ENCODE measurements at regions of chr5 and their contacts with region 1.

Region 1: GRCh38 chr5:38809388-38810359 is 36.1 kb upstream of the OSMR start:
- DNase-seq: peak in 1 of 2 experiments; percentile 88
- H3K4me3 ChIP-seq: no peak overlapping the region
- H3K27ac ChIP-seq: no peak overlapping the region
- H3K4me1 ChIP-seq: no peaks in the 10 kb centered on the region; the same call in 1 of the 2 replicates
- H3K27me3 ChIP-seq: no peaks in the 10 kb centered on the region
- CTCF ChIP-seq: peak; percentile 95

Region 2: GRCh38 chr5:38265546-38266179 is 544.0 kb before region 1 on chr5:
- CTCF ChIA-PET with region 1: interaction called, 5 read pairs
- POLR2A ChIA-PET with region 1: no interaction called
- intact Hi-C with region 1: loop called (anchors 1 kb)
- DNase-seq: peak in 1 of 2 experiments; percentile 70
- H3K4me3 ChIP-seq: no peak overlapping the region
- H3K27ac ChIP-seq: no peak overlapping the region
- H3K4me1 ChIP-seq: no peaks in the 10 kb centered on the region
- H3K27me3 ChIP-seq: peaks cover 56% of the 10 kb centered on the region
- CTCF ChIP-seq: peak; percentile 90

Region 3: GRCh38 chr5:38420691-38421390 is 388.8 kb before region 1 on chr5:
- CTCF ChIA-PET with region 1: interaction called, 87 read pairs
- POLR2A ChIA-PET with region 1: no interaction called
- intact Hi-C with region 1: loop called (anchors 1 kb)
- DNase-seq: peak; percentile 40 to 74
- H3K4me3 ChIP-seq: no peak overlapping the region
- H3K27ac ChIP-seq: no peak overlapping the region
- H3K4me1 ChIP-seq: no peaks in the 10 kb centered on the region
- H3K27me3 ChIP-seq: peaks cover 10% of the 10 kb centered on the region; the same call in 1 of the 2 replicates
- CTCF ChIP-seq: peak; percentile 81

Region 4: DNA sequence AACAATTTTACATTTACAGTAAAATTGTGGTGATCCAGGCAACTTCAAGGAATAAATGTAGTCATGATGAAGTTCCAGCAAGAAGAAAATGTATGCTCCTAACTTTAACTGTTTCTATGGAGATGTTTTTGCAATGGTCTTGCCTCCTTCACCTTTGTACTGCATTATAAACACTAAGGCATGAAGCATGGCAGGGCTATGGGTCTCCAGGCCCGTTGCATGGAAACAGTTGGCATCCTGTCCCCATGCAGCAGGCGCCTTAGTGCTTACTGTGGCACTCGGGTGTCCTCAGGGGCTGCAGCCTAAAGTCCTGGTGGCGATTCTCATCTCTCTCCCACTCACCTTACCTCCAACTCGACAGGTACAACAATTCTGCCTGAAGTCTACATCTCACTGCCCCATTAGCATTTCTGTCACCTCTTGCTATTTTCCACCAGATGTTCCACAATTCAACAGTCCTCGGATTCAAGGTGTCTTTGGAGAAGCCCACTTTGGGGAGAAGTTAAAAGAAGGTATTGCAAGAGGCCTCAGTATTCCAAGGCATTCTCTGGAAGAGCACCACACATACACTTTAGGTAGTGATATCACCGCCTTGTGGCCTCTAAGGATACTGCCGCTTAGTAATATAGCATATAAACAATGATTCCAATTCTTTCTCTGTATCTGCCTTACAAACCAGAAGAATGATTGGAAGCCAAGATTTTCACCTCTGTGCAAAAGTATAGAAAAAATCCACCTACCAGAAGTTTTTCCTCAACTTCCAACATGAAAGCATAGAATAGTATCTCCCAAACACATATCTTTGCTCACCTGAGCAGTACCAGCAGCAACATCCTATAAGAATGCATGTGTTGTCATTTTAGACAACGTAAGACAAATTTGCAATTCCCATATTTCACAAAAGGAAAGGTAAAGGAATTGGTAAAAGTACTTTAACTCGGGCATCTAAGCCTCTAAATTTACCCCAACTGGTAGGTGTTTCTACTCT is 258.4 kb before region 1 on chr5:
- CTCF ChIA-PET with region 1: interaction called, 7 read pairs
- POLR2A ChIA-PET with region 1: no interaction called
- intact Hi-C with region 1: loop called (anchors 2 kb)
- DNase-seq: peak in 1 of 2 experiments; percentile 25
- H3K4me3 ChIP-seq: no peak overlapping the region
- H3K27ac ChIP-seq: no peak overlapping the region
- H3K4me1 ChIP-seq: peaks cover 11% of the 10 kb centered on the region
- H3K27me3 ChIP-seq: 0 out of 2 replicates have a peak, but pooled peaks cover 15% of the 10 kb centered on the region
- CTCF ChIP-seq: peak; percentile 80

Region 5: DNA sequence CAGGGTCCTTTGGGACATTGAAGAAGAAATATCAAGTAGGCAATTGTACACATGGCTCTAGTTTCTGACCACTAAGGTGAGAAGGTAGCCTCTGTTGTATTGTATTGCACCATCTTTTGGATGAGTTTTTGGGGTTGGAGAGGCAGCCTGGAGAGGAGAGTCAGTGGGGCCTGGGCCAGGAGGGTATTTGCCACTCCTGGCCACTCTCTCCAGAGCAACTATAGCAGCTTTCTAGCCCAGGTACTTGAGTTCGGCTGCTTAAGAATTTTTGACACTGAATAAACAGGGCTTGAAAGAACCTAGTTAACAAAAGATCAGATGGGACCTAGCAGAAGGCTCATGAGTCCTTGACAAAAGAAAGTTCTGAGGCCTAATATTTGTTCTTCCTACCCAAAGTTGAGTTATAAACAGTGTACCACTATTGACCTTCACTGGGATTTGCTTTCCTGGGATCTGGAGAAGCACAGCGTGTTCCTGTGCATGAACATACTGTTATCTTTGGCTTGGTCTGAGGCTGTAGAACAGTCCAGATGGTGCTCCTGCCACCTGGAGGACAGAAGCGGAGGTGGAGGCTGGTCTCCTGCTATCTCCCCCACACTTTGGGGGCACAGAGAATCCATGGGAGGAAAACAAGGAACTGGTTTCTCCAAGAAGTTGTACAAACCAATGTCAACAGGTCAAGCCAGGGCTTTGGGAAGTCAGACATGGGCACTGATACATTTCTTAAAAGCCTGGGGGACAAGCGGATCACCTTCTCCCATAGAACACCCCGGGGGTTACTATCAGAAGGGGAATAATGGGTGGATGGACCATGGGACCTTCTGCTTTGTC is 142.8 kb before region 1 on chr5:
- CTCF ChIA-PET with region 1: interaction called, 3 read pairs
- POLR2A ChIA-PET with region 1: no interaction called
- intact Hi-C with region 1: loop called (anchors 1 kb)
- DNase-seq: peak in 1 of 2 experiments; percentile 52
- H3K4me3 ChIP-seq: no peak overlapping the region
- H3K27ac ChIP-seq: no peak overlapping the region
- H3K4me1 ChIP-seq: no peaks in the 10 kb centered on the region
- H3K27me3 ChIP-seq: no peaks in the 10 kb centered on the region
- CTCF ChIP-seq: peak; percentile 79

Region 6: GRCh38 chr5:38922199-38922598 is 112.5 kb after region 1 on chr5:
- CTCF ChIA-PET with region 1: interaction called, 7 read pairs
- POLR2A ChIA-PET with region 1: interaction called, 4 read pairs
- intact Hi-C with region 1: loop called (anchors 1 kb)
- DNase-seq: peak; percentile 62 to 75
- H3K4me3 ChIP-seq: no peak overlapping the region
- H3K27ac ChIP-seq: no peak overlapping the region
- H3K4me1 ChIP-seq: no peaks in the 10 kb centered on the region
- H3K27me3 ChIP-seq: no peaks in the 10 kb centered on the region
- CTCF ChIP-seq: peak; percentile 98

Measured in PC-9 (cell line).